ENCODE measurements at regions of chr15 and their contacts with region 1.

Region 1: DNA sequence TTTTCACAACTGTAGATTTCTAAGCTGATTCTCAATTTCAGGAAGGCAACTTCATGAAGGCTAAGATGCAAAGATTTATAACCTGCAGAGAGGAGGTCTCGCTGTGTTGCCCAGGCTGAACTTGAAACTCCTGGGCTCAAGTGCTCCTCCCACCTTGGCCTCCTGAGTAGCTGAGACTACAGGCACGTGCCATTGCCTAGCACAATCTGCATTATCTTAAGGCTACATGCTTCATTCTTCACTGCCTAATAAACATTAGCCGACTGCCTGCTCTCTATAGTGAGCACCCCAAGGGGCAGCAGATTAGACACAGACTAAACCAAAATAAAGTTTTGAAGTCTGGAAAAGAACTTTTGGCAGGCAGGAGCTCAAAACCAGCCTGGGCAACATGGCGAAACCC is 17.1 kb downstream of the CPEB1 start:
- DNase-seq: peak in 1 of 4 experiments; percentile 39
- ATAC-seq: peak; percentile 76
- H3K4me3 ChIP-seq: no peak overlapping the region
- H3K27ac ChIP-seq: no peak overlapping the region
- H3K4me1 ChIP-seq: peaks cover 1 to 5% of the 10 kb centered on the region in 2 experiments; a peak in 4 of 5 replicates
- H3K27me3 ChIP-seq: no peaks in the 10 kb centered on the region
- CTCF ChIP-seq: no peak
- EP300 ChIP-seq: no peak
- POLR2A ChIP-seq: no peak
- RAD21 ChIP-seq: no peak

Region 2: DNA sequence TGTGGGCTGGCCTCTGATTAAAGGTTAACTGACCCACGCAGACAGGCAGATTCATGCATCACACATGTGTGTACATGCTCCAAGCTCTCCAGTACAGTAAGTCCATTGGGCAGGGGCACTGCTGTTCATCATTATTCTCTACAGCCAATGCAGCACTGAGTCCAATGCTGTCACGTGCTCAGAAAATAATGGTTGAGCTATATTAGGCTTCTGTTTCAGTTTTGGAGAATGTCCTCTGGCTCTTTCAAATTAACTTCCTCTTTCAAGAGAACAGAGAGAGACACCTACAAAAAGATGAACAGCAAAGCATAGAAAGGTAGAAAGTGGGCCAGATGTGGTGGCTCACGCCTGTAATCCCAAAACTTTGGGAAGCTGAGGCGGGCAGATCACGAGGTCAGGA is 786.8 kb before region 1 on chr15:
- CTCF ChIA-PET with region 1: no interaction called
- POLR2A ChIA-PET with region 1: no interaction called
- in situ Hi-C with region 1: no loop called
- intact Hi-C with region 1: no loop called
- DNase-seq: no peak
- ATAC-seq: no peak
- H3K4me3 ChIP-seq: no peak overlapping the region
- H3K27ac ChIP-seq: no peak overlapping the region
- H3K4me1 ChIP-seq: no peaks in the 10 kb centered on the region; a peak in 1 of 5 replicates
- H3K27me3 ChIP-seq: no peaks in the 10 kb centered on the region
- CTCF ChIP-seq: no peak
- EP300 ChIP-seq: no peak
- POLR2A ChIP-seq: no peak
- RAD21 ChIP-seq: no peak

Region 3: DNA sequence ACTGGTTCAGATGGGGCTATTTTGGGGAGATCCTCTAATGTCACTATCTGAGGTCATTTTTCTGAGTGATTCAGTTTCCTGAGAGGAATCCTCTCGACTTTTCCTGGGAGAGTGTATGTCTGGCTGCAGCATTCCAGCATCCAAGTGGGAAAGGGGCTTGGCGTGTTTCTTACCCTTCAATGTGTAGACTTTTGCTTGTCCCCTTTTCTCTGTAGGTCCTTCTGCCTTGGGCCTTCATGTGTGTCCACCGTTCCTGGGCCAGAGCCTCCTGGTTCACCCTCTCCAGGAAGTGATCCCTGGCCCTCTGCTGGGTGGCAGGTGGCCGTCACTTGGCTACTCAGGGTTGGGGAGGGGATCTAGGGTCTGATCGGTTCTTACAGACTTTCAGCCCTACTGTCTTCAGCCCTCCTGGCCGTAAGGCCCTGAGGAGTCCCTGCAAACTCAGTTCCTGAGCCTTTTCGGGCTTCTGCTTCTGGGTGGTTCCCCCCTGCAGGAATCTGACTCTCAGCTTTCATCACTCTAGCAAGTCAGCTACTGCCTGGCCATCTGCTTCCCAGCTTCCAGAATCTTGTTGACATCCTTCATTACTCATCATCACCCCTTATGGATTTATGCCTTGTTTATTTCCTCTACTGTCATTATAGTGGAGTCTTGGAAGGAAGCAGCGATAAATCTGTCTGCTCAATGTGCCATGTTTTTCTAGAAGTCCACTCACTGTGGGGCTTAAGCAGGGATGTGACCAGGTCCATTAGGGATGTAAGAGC is 317.3 kb before region 1 on chr15:
- CTCF ChIA-PET with region 1: no interaction called
- POLR2A ChIA-PET with region 1: no interaction called
- in situ Hi-C with region 1: no loop called
- intact Hi-C with region 1: no loop called
- DNase-seq: no peak
- ATAC-seq: no peak
- H3K4me3 ChIP-seq: no peak overlapping the region
- H3K27ac ChIP-seq: no peak overlapping the region
- H3K4me1 ChIP-seq: peaks cover 3 to 23% of the 10 kb centered on the region in 2 experiments; a peak in 3 of 5 replicates
- H3K27me3 ChIP-seq: peaks cover 0 to under 1% of the 10 kb centered on the region in 2 experiments; a peak in 2 of 5 replicates
- CTCF ChIP-seq: no peak
- EP300 ChIP-seq: no peak
- POLR2A ChIP-seq: no peak
- RAD21 ChIP-seq: no peak

Region 4: GRCh38 chr15:82371656-82372055 is 258.4 kb before region 1 on chr15:
- CTCF ChIA-PET with region 1: no interaction called
- POLR2A ChIA-PET with region 1: no interaction called
- in situ Hi-C with region 1: no loop called
- intact Hi-C with region 1: no loop called
- DNase-seq: no peak
- ATAC-seq: no peak
- H3K4me3 ChIP-seq: no peak overlapping the region
- H3K27ac ChIP-seq: no peak overlapping the region
- H3K4me1 ChIP-seq: no peaks in the 10 kb centered on the region
- H3K27me3 ChIP-seq: no peaks in the 10 kb centered on the region
- CTCF ChIP-seq: no peak
- EP300 ChIP-seq: no peak
- POLR2A ChIP-seq: no peak
- RAD21 ChIP-seq: no peak

Region 5: DNA sequence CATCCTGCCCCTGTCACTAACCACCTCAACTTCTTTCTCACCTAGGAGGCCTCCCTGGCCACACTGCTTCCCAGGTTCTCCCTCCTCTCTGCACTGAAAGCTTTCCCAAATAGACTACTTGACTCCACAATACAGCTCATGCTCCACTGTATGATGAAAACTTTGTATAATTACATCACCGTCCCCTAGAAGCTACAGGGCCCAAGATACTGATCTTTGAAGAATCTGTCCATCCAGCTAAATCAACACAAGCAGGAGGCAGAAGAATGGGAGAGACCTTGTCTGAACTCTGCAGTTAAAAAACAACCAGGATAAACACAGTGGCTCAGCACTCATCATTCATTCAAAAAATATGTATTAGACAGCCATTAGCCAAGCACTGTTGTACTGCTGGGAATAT is 63.3 kb before region 1 on chr15:
- CTCF ChIA-PET with region 1: no interaction called
- POLR2A ChIA-PET with region 1: interaction called, 3 read pairs
- in situ Hi-C with region 1: no loop called
- intact Hi-C with region 1: loop called (anchors 5 kb)
- DNase-seq: peak in 1 of 4 experiments; percentile 12
- ATAC-seq: peak; percentile 71
- H3K4me3 ChIP-seq: no peak overlapping the region
- H3K27ac ChIP-seq: no peak overlapping the region
- H3K4me1 ChIP-seq: peaks cover 12 to 13% of the 10 kb centered on the region in 2 experiments; a peak in 4 of 5 replicates
- H3K27me3 ChIP-seq: no peaks in the 10 kb centered on the region
- CTCF ChIP-seq: no peak
- EP300 ChIP-seq: peak; percentile 29; the same call in 1 of the 2 replicates
- POLR2A ChIP-seq: no peak
- RAD21 ChIP-seq: no peak

Region 6: GRCh38 chr15:82928711-82929110 is 298.7 kb after region 1 on chr15:
- CTCF ChIA-PET with region 1: no interaction called
- POLR2A ChIA-PET with region 1: no interaction called
- in situ Hi-C with region 1: no loop called
- intact Hi-C with region 1: no loop called
- DNase-seq: no peak
- ATAC-seq: no peak
- H3K4me3 ChIP-seq: no peak overlapping the region
- H3K27ac ChIP-seq: no peak overlapping the region
- H3K4me1 ChIP-seq: no peaks in the 10 kb centered on the region
- H3K27me3 ChIP-seq: peaks cover 29 to 64% of the 10 kb centered on the region in 2 experiments
- CTCF ChIP-seq: no peak
- EP300 ChIP-seq: no peak
- POLR2A ChIP-seq: no peak
- RAD21 ChIP-seq: no peak

Measured in K562 (cell line).